Transverse colon (tissue), 4 donors: ENCODE measurements at regions of chr2 and their contacts with region 1.

Region 1: DNA sequence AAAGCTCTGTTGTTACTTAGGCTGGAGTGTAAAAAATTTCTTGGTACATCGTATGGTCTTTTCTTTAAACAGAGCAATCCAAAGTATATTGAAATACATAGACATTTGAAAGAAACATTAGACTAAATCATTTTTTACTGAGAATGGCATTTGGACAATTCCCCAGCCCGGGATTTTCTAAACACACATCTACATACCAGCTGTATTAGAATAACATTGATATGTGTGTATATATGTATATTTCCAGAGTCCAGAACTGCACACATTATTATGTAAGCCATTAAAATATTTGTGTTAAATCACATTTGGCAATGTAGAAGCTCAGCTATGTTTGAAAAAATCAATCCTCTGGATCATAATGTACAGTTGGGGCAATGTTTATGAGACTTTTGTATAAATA is 1853.6 kb upstream of the LRRTM1 start:
- DNase-seq: no peak
- H3K4me3 ChIP-seq: no peak overlapping the region
- H3K27ac ChIP-seq: no peak overlapping the region
- H3K4me1 ChIP-seq: peaks cover 0 to 8% (median 0%) of the 10 kb centered on the region in 4 donors
- H3K27me3 ChIP-seq: no peaks in the 10 kb centered on the region
- CTCF ChIP-seq: no peak
- EP300 ChIP-seq: no peak
- POLR2A ChIP-seq: no peak

Region 2: GRCh38 chr2:81624825-81625224 is 533.3 kb before region 1 on chr2:
- in situ Hi-C with region 1: no loop called
- intact Hi-C with region 1: loop called (anchors 5 kb)
- DNase-seq: no peak
- H3K4me3 ChIP-seq: no peak overlapping the region
- H3K27ac ChIP-seq: no peak overlapping the region
- H3K4me1 ChIP-seq: no peaks in the 10 kb centered on the region
- H3K27me3 ChIP-seq: no peaks in the 10 kb centered on the region
- CTCF ChIP-seq: no peak
- EP300 ChIP-seq: no peak
- POLR2A ChIP-seq: no peak